Heart left ventricle (tissue), 16 donors: ENCODE measurements at regions of chr7 and their contacts with region 1.

Region 1: GRCh38 chr7:31744294-31744874 is 57.4 kb downstream of the PPP1R17 start:
- DNase-seq: peak; percentile 18 to 65 (median 54)
- ATAC-seq: peak in 3 of 4 donors; percentile 59 to 78 (median 67)
- H3K4me3 ChIP-seq: no peak overlapping the region
- H3K27ac ChIP-seq: no peak overlapping the region
- H3K4me1 ChIP-seq: no peaks in the 10 kb centered on the region
- H3K27me3 ChIP-seq: no peaks in the 10 kb centered on the region
- CTCF ChIP-seq: peak; percentile 64 to 92 (median 88)
- POLR2A ChIP-seq: no peak

Region 2: DNA sequence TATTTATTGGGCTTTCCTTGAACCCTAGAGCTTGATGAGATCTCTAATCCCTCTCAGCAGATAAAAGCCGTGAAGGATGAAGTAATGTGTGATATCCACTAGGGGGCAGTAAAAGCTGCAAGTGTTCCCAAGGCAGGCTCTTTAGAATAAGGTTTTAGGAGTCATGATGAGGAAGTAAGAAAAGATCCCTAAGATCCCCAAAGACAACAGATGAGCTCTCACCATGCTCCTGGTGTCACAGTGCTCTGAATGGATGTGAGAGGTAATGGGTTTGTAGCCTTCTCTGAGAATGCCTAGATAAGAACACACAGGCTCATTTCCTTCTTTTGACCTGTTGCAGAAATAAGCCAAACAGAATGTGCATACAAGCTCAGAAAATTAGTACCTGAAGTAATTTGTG is 300.9 kb before region 1 on chr7:
- intact Hi-C with region 1: loop called in 8 of 10 experiments (anchors 5 to 10 kb)
- DNase-seq: no peak
- ATAC-seq: peak in 2 of 4 donors; percentile 55 to 62
- H3K4me3 ChIP-seq: no peak overlapping the region
- H3K27ac ChIP-seq: no peak overlapping the region
- H3K4me1 ChIP-seq: no peaks in the 10 kb centered on the region
- H3K27me3 ChIP-seq: peaks cover 0 to 30% (median 3%) of the 10 kb centered on the region in 9 donors
- CTCF ChIP-seq: peak; percentile 62 to 86 (median 76)
- POLR2A ChIP-seq: no peak

Region 3: GRCh38 chr7:31788445-31788844 is 44.1 kb after region 1 on chr7:
- intact Hi-C with region 1: no loop called
- DNase-seq: no peak
- ATAC-seq: no peak
- H3K4me3 ChIP-seq: no peak overlapping the region
- H3K27ac ChIP-seq: no peak overlapping the region
- H3K4me1 ChIP-seq: peaks cover 0 to 8% (median 0%) of the 10 kb centered on the region in 12 donors
- H3K27me3 ChIP-seq: no peaks in the 10 kb centered on the region
- CTCF ChIP-seq: no peak
- POLR2A ChIP-seq: no peak

Region 4: GRCh38 chr7:32023376-32023775 is 279.0 kb after region 1 on chr7:
- intact Hi-C with region 1: no loop called
- DNase-seq: no peak
- ATAC-seq: no peak
- H3K4me3 ChIP-seq: no peak overlapping the region
- H3K27ac ChIP-seq: no peak overlapping the region
- H3K4me1 ChIP-seq: peaks cover 0 to 44% (median 15%) of the 10 kb centered on the region in 12 donors
- H3K27me3 ChIP-seq: no peaks in the 10 kb centered on the region
- CTCF ChIP-seq: no peak
- POLR2A ChIP-seq: no peak

Region 5: GRCh38 chr7:32070406-32071360 is 326.3 kb after region 1 on chr7 and contains the start of gene PDE1C:
- intact Hi-C with region 1: loop called in 1 of 10 experiments (anchors 5 kb)
- DNase-seq: peak; percentile 78 to 90 (median 81)
- ATAC-seq: peak; percentile 62 to 91 (median 82)
- H3K4me3 ChIP-seq: peak within 1 kb of the TSS; percentile 42 to 80 (median 64)
- H3K27ac ChIP-seq: peak within 1 kb of the TSS; percentile 78 to 97 (median 92)
- H3K4me1 ChIP-seq: peaks cover 0 to 42% (median 8%) of the 10 kb centered on the region in 12 donors
- H3K27me3 ChIP-seq: peaks cover 0 to 23% (median 0%) of the 10 kb centered on the region in 9 donors
- CTCF ChIP-seq: no peak
- POLR2A ChIP-seq: peak in 1 of 2 donors; percentile 43
- total RNA-seq, gene PDE1C: 63.7 to 307 (median 143) TPM

Region 6: GRCh38 chr7:32347244-32347828 is 603.0 kb after region 1 on chr7:
- intact Hi-C with region 1: loop called in 5 of 10 experiments (anchors 5 to 10 kb)
- DNase-seq: no peak
- ATAC-seq: no peak
- H3K4me3 ChIP-seq: no peak overlapping the region
- H3K27ac ChIP-seq: no peak overlapping the region
- H3K4me1 ChIP-seq: no peaks in the 10 kb centered on the region
- H3K27me3 ChIP-seq: no peaks in the 10 kb centered on the region
- CTCF ChIP-seq: peak; percentile 45 to 76 (median 66)
- POLR2A ChIP-seq: no peak

Region 7: GRCh38 chr7:32479574-32480200 is 735.3 kb after region 1 on chr7:
- intact Hi-C with region 1: loop called in 9 of 10 experiments (anchors 5 to 10 kb)
- DNase-seq: no peak
- ATAC-seq: peak in 1 of 4 donors; percentile 58
- H3K4me3 ChIP-seq: no peak overlapping the region
- H3K27ac ChIP-seq: no peak overlapping the region
- H3K4me1 ChIP-seq: peaks cover 0 to 14% (median 0%) of the 10 kb centered on the region in 12 donors
- H3K27me3 ChIP-seq: no peaks in the 10 kb centered on the region
- CTCF ChIP-seq: peak; percentile 60 to 84 (median 66)
- POLR2A ChIP-seq: no peak